PC-9 (cell line): ENCODE measurements at regions of chr6 and their contacts with region 1.

Region 1: DNA sequence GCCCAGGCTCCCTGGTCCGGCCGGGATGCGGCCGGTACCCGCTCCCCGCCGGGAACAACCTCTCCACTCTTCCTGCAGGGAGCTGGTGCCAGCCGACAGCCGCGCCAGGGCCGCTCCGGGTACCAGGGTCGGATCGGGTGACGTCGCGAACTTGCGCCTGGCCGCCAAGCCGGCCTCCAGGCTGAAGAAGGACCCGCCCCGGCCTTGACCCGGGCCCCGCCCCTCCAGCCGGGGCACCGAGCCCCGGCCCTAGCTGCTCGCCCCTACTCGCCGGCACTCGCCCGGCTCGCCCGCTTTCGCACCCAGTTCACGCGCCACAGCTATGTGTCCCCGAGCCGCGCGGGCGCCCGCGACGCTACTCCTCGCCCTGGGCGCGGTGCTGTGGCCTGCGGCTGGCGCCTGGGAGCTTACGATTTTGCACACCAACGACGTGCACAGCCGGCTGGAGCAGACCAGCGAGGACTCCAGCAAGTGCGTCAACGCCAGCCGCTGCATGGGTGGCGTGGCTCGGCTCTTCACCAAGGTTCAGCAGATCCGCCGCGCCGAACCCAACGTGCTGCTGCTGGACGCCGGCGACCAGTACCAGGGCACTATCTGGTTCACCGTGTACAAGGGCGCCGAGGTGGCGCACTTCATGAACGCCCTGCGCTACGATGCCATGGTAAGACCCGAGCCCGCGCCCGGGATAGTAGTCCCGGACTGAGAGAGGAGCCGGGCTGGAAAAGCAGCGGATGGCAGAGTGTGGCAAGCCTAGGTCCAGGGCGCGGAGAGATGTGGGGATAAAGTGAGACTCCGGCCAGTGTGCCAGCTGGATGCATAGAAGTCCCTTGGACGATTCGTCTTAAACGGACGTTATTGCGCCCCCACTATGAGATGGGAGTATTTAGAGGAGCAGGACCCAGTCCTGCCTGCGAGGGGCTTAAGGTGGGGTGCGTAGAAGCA is at the start of gene NT5E:
- DNase-seq: peak; percentile 71 to 88
- H3K4me3 ChIP-seq: peak within 1 kb of the TSS; percentile 94
- H3K27ac ChIP-seq: peak within 1 kb of the TSS; percentile 74
- H3K4me1 ChIP-seq: peaks cover 52% of the 10 kb centered on the region
- H3K27me3 ChIP-seq: no peaks in the 10 kb centered on the region
- CTCF ChIP-seq: no peak
- total RNA-seq, gene NT5E: 84.6 and 90.4 TPM in 2 replicates

Region 2: GRCh38 chr6:84455630-84456029 is 994.5 kb before region 1 on chr6:
- CTCF ChIA-PET with region 1: no interaction called
- POLR2A ChIA-PET with region 1: interaction called, 10 read pairs
- intact Hi-C with region 1: no loop called
- DNase-seq: no peak
- H3K4me3 ChIP-seq: no peak overlapping the region
- H3K27ac ChIP-seq: no peak overlapping the region
- H3K4me1 ChIP-seq: no peaks in the 10 kb centered on the region
- H3K27me3 ChIP-seq: no peaks in the 10 kb centered on the region
- CTCF ChIP-seq: no peak

Region 3: DNA sequence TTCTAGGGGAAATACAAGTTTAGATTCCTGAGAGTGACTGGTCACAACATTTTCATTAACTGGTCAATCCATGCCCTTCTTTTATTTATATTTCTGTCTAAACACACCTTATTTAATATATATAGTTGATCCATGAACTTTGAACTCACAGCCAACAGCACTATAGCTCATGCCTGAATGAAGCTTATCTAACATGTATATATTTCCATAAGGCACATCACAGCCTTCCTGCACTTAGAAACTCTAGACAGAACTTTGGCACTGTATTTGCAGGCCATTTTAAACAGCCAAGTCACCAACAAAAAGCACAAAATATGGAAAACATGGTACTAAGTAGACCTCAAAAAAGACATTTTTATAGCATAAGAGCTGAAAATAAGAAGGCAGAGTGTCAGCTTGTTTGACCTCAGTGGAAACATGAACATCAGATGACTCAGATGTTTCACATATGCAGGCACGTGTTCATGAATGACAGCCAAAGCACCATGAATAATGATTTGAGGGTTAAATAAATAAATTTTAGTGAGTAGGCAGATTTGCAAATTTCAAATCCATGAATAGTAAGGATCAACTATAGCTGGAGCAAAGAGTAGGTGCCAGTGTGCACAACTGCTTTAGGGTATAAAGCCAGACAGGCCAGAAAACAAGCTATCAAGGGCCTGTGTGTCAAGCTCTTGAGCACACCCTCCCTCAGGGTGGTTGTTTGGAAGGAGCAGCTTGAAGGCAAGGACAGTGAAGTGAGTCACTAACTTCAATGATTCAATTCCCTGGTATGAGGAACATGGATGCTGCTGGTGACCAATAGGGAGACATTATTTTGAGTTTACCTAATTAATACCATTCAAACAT is 89.1 kb before region 1 on chr6:
- CTCF ChIA-PET with region 1: interaction called, 3 read pairs
- POLR2A ChIA-PET with region 1: interaction called, 22 read pairs
- intact Hi-C with region 1: loop called (anchors 1 kb)
- DNase-seq: peak; percentile 75 to 96
- H3K4me3 ChIP-seq: no peak overlapping the region
- H3K27ac ChIP-seq: peak overlapping the region; percentile 87
- H3K4me1 ChIP-seq: peaks cover 61% of the 10 kb centered on the region
- H3K27me3 ChIP-seq: no peaks in the 10 kb centered on the region
- CTCF ChIP-seq: no peak

Region 4: GRCh38 chr6:85404502-85405174 is 45.5 kb before region 1 on chr6:
- CTCF ChIA-PET with region 1: no interaction called
- POLR2A ChIA-PET with region 1: interaction called, 3 read pairs
- intact Hi-C with region 1: loop called (anchors 2 kb)
- DNase-seq: peak; percentile 60 to 73
- H3K4me3 ChIP-seq: no peak overlapping the region; the same call in 1 of the 2 replicates
- H3K27ac ChIP-seq: peak overlapping the region; percentile 75
- H3K4me1 ChIP-seq: peaks cover 51% of the 10 kb centered on the region
- H3K27me3 ChIP-seq: no peaks in the 10 kb centered on the region
- CTCF ChIP-seq: no peak

Region 5: GRCh38 chr6:85669735-85670194 is 219.7 kb after region 1 on chr6:
- CTCF ChIA-PET with region 1: interaction called, 18 read pairs
- POLR2A ChIA-PET with region 1: interaction called, 4 read pairs
- intact Hi-C with region 1: no loop called
- DNase-seq: peak in 1 of 2 experiments; percentile 52
- H3K4me3 ChIP-seq: no peak overlapping the region
- H3K27ac ChIP-seq: peak overlapping the region; percentile 29; the same call in 1 of the 2 replicates
- H3K4me1 ChIP-seq: no peaks in the 10 kb centered on the region
- H3K27me3 ChIP-seq: no peaks in the 10 kb centered on the region
- CTCF ChIP-seq: no peak